ENCODE measurements at regions of chr10 and their contacts with region 1.

Region 1: DNA sequence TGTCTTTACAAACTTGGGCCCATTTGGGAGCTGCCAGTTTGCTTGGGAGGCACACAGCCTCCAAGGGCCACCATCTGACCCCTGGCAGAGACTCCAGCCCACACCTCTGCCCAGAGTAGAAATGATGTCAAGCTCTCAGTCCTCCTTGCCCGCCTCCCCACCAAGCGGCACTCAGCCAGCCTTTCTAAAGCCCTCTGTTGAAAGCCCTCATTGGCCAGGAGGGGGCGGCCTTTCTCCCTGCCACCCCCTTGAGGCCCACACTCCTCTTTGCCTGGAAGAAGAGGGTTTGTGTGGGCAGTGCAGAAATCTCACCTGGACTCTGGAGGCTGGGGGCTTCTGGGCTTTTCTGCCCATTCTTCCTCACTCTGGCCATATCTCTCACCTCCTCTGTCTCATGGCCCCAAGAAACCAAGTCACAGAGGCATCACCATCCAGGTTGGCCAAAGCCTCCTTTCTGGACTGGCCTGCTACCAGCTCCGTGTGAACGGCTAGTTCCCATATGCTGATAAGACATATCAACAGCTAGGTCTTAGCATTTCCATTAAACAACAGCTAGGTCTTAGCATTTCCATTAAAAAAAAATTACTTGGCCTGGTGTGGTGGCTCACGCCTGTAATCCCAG is 36.1 kb downstream of the UBTD1 start:
- H3K4me3 ChIP-seq: no peak overlapping the region
- H3K27ac ChIP-seq: no peak overlapping the region
- H3K4me1 ChIP-seq: no peaks in the 10 kb centered on the region
- CTCF ChIP-seq: peak; percentile 53; the same call in 1 of the 2 replicates

Region 2: GRCh38 chr10:97509120-97509680 is 25.7 kb before region 1 on chr10:
- CTCF ChIA-PET with region 1: interaction called, 10 read pairs
- POLR2A ChIA-PET with region 1: no interaction called
- H3K4me3 ChIP-seq: no peak overlapping the region
- H3K27ac ChIP-seq: no peak overlapping the region
- H3K4me1 ChIP-seq: no peaks in the 10 kb centered on the region
- CTCF ChIP-seq: no peak

Region 3: DNA sequence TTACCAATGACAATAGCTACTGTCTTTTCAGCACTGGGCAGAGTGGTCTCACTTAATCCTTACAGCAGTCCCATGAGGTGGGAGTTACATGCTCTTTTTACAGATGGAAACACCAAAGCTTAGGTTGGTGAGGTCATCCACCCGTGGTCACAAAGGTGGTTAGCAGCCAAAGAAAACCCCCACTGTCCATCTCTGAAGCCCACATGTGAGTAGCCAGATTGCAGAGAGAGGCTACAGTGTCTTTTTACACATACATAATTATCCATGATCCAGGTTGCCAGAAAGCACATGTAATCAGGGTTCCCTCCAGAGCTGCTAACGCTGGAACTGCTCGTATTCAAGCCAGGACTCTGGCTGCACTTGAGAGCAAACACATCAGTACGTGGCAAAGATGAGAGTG is 13.1 kb after region 1 on chr10:
- CTCF ChIA-PET with region 1: interaction called, 54 read pairs
- POLR2A ChIA-PET with region 1: no interaction called
- H3K4me3 ChIP-seq: no peak overlapping the region
- H3K27ac ChIP-seq: no peak overlapping the region
- H3K4me1 ChIP-seq: peaks cover 9% of the 10 kb centered on the region; the same call in 1 of the 2 replicates
- CTCF ChIP-seq: no peak

Measured in HEK293 (cell line).